ENCODE measurements at regions of chr6 and their contacts with region 1.

Region 1: DNA sequence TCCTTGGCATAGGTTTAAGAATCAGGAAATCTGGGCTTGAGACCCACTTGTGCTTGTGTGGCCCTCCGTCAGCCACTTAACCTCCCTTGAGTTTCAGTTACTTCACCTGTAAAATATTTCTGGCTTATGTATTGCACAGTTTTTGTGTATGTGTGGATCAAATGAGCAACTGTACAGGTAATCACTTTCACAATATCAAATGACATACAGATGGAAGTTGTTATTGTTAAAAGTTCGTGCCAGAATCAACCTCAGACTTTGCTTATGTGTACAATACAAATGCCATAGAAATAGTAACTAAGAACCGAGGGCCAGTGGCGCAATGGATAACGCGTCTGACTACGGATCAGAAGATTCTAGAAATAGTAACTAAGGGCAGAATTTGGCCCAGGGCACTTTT is 65.6 kb upstream of the KIF13A start:
- DNase-seq: no peak
- ATAC-seq: no peak
- H3K4me3 ChIP-seq: no peak overlapping the region
- H3K27ac ChIP-seq: peak overlapping the region in 1 of 2 donors; percentile 40
- H3K4me1 ChIP-seq: no peaks in the 10 kb centered on the region
- H3K27me3 ChIP-seq: no peaks in the 10 kb centered on the region

Region 2: GRCh38 chr6:17640477-17640917 is 412.6 kb before region 1 on chr6:
- intact Hi-C with region 1: no loop called
- DNase-seq: no peak
- ATAC-seq: no peak
- H3K4me3 ChIP-seq: no peak overlapping the region
- H3K27ac ChIP-seq: peak overlapping the region in 1 of 2 donors; percentile 17
- H3K4me1 ChIP-seq: peaks cover 0 to 2% of the 10 kb centered on the region in 2 donors
- H3K27me3 ChIP-seq: no peaks in the 10 kb centered on the region

Region 3: DNA sequence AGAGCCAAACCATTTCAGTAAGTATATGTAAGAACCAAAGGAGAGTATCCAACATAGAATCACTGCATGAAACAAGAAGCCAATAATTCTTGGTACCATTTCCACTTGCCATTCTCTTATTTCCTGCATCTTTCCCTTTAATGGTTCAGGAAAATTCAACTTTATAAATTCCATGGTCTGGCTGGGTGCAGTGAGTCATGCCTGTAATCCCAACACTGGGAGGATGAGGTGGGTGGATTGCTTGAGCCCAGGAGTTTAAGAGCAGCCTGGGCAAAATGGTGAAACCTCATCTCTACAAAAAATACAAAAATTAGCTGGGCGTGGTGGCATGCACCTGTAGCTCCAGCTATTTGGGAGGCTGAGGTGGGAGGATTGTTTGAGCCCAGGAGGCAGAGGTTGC is 48.2 kb after region 1 on chr6:
- intact Hi-C with region 1: loop called in 1 of 2 experiments (anchors 5 kb)
- DNase-seq: no peak
- ATAC-seq: no peak
- H3K4me3 ChIP-seq: no peak overlapping the region
- H3K27ac ChIP-seq: no peak overlapping the region
- H3K4me1 ChIP-seq: no peaks in the 10 kb centered on the region
- H3K27me3 ChIP-seq: no peaks in the 10 kb centered on the region

Region 4: GRCh38 chr6:18242062-18242851 is 189.2 kb after region 1 on chr6:
- intact Hi-C with region 1: no loop called
- DNase-seq: no peak
- ATAC-seq: no peak
- H3K4me3 ChIP-seq: no peak overlapping the region
- H3K27ac ChIP-seq: no peak overlapping the region
- H3K4me1 ChIP-seq: no peaks in the 10 kb centered on the region
- H3K27me3 ChIP-seq: no peaks in the 10 kb centered on the region

Measured in aorta (tissue), 5 donors.